ENCODE measurements at regions of chr6 and their contacts with region 1.

Region 1: GRCh38 chr6:32255199-32256153 is 31.6 kb upstream of the NOTCH4 start:
- DNase-seq: peak; percentile 54
- ATAC-seq: peak; percentile 79
- H3K4me3 Mint-ChIP-seq: peak overlapping the region; percentile 84
- H3K27ac Mint-ChIP-seq: peak overlapping the region; percentile 92
- H3K4me1 Mint-ChIP-seq: peaks cover 77% of the 10 kb centered on the region
- H3K27me3 Mint-ChIP-seq: no peaks in the 10 kb centered on the region
- CTCF ChIP-seq: peak; percentile 39

Region 2: DNA sequence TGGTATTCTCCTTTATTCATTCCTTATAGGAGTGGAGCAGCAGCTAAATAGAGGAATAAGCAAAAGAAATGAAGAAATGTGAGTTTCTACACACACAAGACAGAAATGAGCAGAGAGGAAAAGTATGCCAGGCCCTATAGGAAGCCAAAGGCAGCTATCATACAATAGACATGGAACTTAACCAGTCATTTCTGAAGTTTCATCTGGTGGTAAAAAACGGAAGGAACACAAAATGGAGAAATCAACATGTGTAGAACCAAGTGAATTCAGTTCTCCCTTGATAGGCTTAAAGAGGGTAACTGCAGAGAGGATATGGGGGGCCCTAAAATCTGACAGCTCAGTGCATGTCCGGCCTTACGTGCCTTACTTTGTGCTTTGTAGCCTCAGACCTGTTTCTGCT is 71.6 kb after region 1 on chr6:
- CTCF ChIA-PET with region 1: interaction called, 8 read pairs
- POLR2A ChIA-PET with region 1: interaction called, 16 read pairs
- intact Hi-C with region 1: loop called (anchors 2 kb)
- DNase-seq: no peak
- ATAC-seq: peak; percentile 89
- H3K4me3 Mint-ChIP-seq: peak overlapping the region; percentile 44
- H3K27ac Mint-ChIP-seq: peak overlapping the region; percentile 69
- H3K4me1 Mint-ChIP-seq: peaks cover 25% of the 10 kb centered on the region
- H3K27me3 Mint-ChIP-seq: no peaks in the 10 kb centered on the region
- CTCF ChIP-seq: no peak